Activated CD4-positive, alpha-beta memory T cell treated with anti-CD3 and anti-CD28 coated beads for 36 hours (primary cell): ENCODE measurements at regions of chr6 and their contacts with region 1.

Region 1: DNA sequence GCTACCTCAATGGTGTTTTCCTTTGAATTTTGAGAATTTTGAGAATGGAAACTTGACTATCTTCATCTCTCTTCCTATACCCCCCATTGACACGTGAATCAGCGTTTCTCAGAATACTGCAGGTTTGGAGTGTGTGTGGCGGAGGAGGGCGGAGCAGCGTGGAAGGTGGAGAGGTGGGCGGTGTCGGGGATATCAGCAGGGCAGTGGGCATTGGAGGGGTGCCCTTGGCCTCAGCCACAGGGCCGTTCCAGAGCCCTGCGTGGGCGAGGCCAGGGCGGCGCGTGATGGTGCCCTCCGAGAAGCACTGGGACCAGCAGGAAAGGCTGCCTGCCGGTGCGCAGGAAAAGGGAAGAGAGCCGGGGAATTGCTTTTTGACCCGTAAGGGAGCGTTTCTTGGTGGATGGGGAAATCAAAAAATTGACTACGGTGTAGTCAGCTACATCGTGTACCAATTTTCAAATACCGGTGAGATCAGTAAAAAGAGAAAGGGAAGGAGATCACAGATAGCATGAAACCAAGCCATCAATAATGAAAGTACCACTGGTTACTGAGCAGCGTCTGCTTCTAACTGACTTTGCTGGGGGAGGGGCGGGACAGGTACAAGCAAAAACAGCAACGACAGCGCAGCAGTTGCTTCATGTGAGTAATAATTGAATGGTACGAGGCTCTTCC is 82.7 kb upstream of the DUSP22 start:
- DNase-seq: peak; percentile 90
- H3K4me3 Mint-ChIP-seq: peak overlapping the region; percentile 66
- H3K27ac Mint-ChIP-seq: peak overlapping the region; percentile 73
- H3K4me1 Mint-ChIP-seq: peaks cover 30% of the 10 kb centered on the region
- H3K27me3 Mint-ChIP-seq: peaks cover 33% of the 10 kb centered on the region

Region 2: DNA sequence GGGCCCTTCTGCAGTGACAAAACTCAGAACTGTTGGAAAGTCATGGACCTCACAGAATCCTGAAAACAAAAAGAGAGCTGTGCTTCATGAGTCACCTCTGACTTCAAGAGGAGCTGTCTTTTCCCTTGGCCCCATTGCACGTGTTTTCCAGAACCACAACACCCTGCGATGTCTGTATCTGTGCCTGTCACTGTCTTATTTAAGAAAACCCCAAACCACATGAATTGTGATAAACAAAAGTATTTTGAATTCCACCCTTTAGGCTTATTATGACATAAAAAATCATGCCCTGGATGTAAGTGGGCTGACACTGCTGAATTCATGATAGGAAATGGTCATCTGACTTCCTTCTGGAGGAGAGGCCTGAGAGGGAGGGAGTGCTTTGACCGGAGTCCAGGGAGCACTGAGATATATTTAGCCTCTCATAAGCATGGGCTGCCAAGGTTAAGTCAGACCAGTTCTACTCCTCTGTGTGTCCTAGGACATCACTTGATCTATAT is 13.7 kb before region 1 on chr6:
- CTCF ChIA-PET with region 1: interaction called, 5 read pairs
- POLR2A ChIA-PET with region 1: interaction called, 4 read pairs
- intact Hi-C with region 1: loop called (anchors 1 kb)
- DNase-seq: peak; percentile 84
- H3K4me3 Mint-ChIP-seq: no peak overlapping the region
- H3K27ac Mint-ChIP-seq: peak overlapping the region; percentile 49
- H3K4me1 Mint-ChIP-seq: peaks cover 47% of the 10 kb centered on the region
- H3K27me3 Mint-ChIP-seq: peaks cover 3% of the 10 kb centered on the region

Region 3: DNA sequence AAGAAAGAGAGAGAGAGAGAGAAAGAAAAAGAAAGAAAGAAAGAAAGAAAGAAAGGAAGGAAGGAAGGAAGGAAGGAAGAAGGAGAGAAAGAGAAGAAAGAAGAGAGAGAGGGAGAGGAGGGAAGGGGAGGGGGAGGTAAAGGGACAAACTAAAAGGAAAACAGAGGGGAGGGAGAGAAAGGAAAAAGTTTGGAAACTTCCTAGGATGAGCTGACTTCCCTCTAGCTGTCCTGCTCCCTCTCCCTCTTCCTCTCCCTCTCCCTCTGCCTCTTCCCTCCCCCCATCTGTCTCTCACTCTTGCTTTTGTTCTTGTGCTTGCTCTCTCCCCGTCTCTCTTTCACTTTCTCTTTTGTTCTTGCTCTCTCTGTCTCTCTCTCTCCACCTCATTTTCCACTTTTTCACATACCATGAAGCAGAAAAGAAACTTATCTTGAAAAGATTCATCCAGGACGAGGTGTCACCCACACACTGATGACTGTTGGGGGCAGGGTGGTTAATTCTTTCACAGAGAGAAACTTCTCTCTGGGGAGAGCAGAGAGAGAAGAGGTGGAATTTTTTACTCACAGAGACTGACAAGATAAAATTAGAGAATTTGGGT is 26.3 kb after region 1 on chr6:
- CTCF ChIA-PET with region 1: no interaction called
- POLR2A ChIA-PET with region 1: no interaction called
- intact Hi-C with region 1: loop called (anchors 1 kb)
- DNase-seq: peak; percentile 83
- H3K4me3 Mint-ChIP-seq: peak overlapping the region; percentile 24
- H3K27ac Mint-ChIP-seq: peak overlapping the region; percentile 64
- H3K4me1 Mint-ChIP-seq: peaks cover 43% of the 10 kb centered on the region
- H3K27me3 Mint-ChIP-seq: no peaks in the 10 kb centered on the region

Region 4: GRCh38 chr6:251920-252319 is 42.4 kb after region 1 on chr6:
- CTCF ChIA-PET with region 1: no interaction called
- POLR2A ChIA-PET with region 1: no interaction called
- intact Hi-C with region 1: loop called (anchors 1 kb)
- DNase-seq: no peak
- H3K4me3 Mint-ChIP-seq: no peak overlapping the region
- H3K27ac Mint-ChIP-seq: peak overlapping the region; percentile 61
- H3K4me1 Mint-ChIP-seq: peaks cover 30% of the 10 kb centered on the region
- H3K27me3 Mint-ChIP-seq: peaks cover 2% of the 10 kb centered on the region

Region 5: DNA sequence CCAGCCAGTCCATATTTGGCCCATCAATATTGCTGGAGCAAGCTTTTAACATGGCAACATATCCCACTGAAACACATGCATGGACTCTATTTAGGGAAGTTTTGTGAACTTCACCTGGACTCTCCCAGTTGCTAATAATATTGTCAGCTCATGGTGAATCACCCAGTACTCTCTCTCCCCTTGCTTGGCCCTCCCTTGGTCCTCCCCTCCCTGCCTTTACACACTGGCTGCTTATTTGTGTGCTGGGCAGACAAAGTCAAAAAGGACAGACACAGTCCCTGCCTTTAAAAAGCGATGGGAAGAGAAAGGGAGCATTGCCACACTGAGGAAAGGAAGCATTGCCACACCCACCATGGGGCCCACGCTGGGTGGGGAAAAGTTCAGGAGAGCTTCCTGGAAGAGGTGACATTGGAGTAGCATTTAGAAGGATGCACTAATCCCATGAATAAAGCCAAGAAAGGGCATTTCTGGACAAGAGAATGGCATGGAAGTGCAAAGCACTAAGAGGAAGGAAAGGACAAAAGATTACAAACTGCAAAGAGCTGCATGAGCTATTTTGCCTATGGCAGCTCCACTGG is 626.8 kb after region 1 on chr6:
- CTCF ChIA-PET with region 1: no interaction called
- POLR2A ChIA-PET with region 1: no interaction called
- intact Hi-C with region 1: no loop called
- DNase-seq: no peak
- H3K4me3 Mint-ChIP-seq: no peak overlapping the region
- H3K27ac Mint-ChIP-seq: no peak overlapping the region
- H3K4me1 Mint-ChIP-seq: no peaks in the 10 kb centered on the region
- H3K27me3 Mint-ChIP-seq: peaks cover 9% of the 10 kb centered on the region